K562 (cell line): ENCODE measurements at regions of chr13 and their contacts with region 1.

Region 1: GRCh38 chr13:24671386-24672107 is 8.7 kb upstream of the ATP12A start:
- DNase-seq: peak; percentile 22 to 38 (median 32)
- ATAC-seq: peak; percentile 82
- H3K4me3 ChIP-seq: no peak overlapping the region
- H3K27ac ChIP-seq: no peak overlapping the region
- H3K4me1 ChIP-seq: no peaks in the 10 kb centered on the region
- H3K27me3 ChIP-seq: peaks cover 2 to 23% of the 10 kb centered on the region in 2 experiments; a peak in 3 of 5 replicates
- CTCF ChIP-seq: peak; percentile 21 to 60 (median 54); a peak in 4 of 6 replicates
- EP300 ChIP-seq: no peak
- POLR2A ChIP-seq: no peak
- RAD21 ChIP-seq: peak in 1 of 2 experiments; percentile 29; a peak in 3 of 4 replicates

Region 2: DNA sequence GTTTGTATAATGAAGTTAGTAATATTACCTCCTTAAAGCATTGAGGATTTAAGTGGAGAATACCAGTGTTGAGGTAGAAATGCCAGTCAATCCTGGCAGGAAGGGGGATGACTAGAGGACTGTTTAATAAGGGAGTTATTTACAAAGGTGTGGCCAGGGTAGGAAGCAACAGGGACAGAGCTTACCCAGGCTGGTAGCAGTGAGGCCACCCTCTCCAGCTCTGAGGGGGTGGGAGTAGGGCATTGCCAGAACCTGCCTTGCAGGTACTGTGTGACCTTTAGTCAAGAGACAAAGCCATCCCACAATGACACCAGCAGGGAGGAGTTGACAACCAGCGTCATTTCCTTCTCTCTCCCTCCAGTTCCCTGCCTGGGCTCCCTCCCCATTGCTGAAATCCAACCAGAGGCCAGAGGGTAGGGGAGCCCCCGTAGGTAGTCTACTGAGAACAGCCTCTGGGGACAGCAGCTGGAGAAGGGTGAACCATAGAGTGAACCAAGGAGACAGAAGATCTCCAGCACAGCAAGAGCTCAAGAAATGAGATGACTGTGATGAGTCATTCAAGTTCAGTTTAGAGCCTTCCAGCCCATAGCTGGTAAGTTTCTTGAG is 544.4 kb before region 1 on chr13:
- CTCF ChIA-PET with region 1: no interaction called
- POLR2A ChIA-PET with region 1: no interaction called
- in situ Hi-C with region 1: no loop called
- intact Hi-C with region 1: no loop called
- DNase-seq: no peak
- ATAC-seq: no peak
- H3K4me3 ChIP-seq: no peak overlapping the region
- H3K27ac ChIP-seq: no peak overlapping the region
- H3K4me1 ChIP-seq: no peaks in the 10 kb centered on the region
- H3K27me3 ChIP-seq: no peaks in the 10 kb centered on the region
- CTCF ChIP-seq: no peak
- EP300 ChIP-seq: no peak
- POLR2A ChIP-seq: no peak
- RAD21 ChIP-seq: no peak

Region 3: GRCh38 chr13:24450530-24450929 is 221.0 kb before region 1 on chr13:
- CTCF ChIA-PET with region 1: no interaction called
- POLR2A ChIA-PET with region 1: no interaction called
- in situ Hi-C with region 1: no loop called
- intact Hi-C with region 1: no loop called
- DNase-seq: no peak
- ATAC-seq: no peak
- H3K4me3 ChIP-seq: no peak overlapping the region
- H3K27ac ChIP-seq: no peak overlapping the region
- H3K4me1 ChIP-seq: no peaks in the 10 kb centered on the region
- H3K27me3 ChIP-seq: no peaks in the 10 kb centered on the region
- CTCF ChIP-seq: no peak
- EP300 ChIP-seq: no peak
- POLR2A ChIP-seq: no peak
- RAD21 ChIP-seq: no peak

Region 4: DNA sequence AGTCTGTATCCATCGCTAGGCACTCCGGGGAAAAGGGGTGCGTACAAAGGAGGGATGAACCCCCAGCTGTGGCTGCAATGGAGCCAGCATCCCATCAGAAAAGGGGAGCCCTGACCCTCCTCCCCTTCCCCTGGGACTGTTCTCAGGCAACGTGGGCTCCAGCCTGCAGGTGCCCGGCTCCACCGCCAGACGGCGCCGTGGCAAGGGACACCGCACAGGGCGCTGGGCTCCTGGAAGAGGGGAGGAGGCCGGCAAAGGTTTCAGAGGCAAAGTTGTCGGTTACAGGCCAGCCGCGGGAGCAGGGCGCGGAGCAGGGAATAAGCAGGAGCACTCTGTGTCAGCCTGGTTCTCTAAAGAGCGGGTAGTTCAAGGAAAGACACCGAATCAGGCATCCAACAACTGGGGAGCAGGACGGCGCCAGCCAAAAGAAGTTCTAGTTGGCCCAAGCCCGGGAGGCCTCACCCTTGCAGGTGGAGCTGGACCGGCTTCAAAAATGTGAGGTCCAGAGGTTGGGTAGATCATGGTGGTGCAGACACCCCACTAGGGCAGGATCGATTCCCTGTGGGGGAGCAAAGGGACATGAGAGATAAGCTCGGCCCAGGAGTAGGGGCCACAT is 44.3 kb before region 1 on chr13:
- CTCF ChIA-PET with region 1: interaction called, 5 read pairs
- POLR2A ChIA-PET with region 1: no interaction called
- in situ Hi-C with region 1: no loop called
- intact Hi-C with region 1: loop called (anchors 1 kb)
- DNase-seq: peak; percentile 52 to 70 (median 68)
- ATAC-seq: peak; percentile 96
- H3K4me3 ChIP-seq: no peak overlapping the region
- H3K27ac ChIP-seq: no peak overlapping the region
- H3K4me1 ChIP-seq: peaks cover 4 to 5% of the 10 kb centered on the region in 2 experiments; a peak in 3 of 5 replicates
- H3K27me3 ChIP-seq: no peaks in the 10 kb centered on the region
- CTCF ChIP-seq: peak; percentile 71 to 87 (median 81)
- EP300 ChIP-seq: no peak
- POLR2A ChIP-seq: no peak
- RAD21 ChIP-seq: peak in 1 of 2 experiments; percentile 54; a peak in 3 of 4 replicates